Activated T-helper 1 cell treated with anti-CD3 and anti-CD28 coated beads, Interleukin-12 subunit alpha, Interleukin-12 subunit beta, Interleukin-2, Interleukin-4 antibody, amounts not matched to agents 30 ng/mL and 10 ng/mL and 1 ng/mL, durations not matched to agents 14 hours and 24 hours and 36 hours (primary cell): ENCODE measurements at regions of chr7 and their contacts with region 1.

Region 1: GRCh38 chr7:119167431-119167830 is 942.9 kb downstream of the ANKRD7 start:
- DNase-seq: no peak
- H3K4me3 Mint-ChIP-seq: no peak overlapping the region
- H3K27ac Mint-ChIP-seq: no peak overlapping the region
- H3K4me1 Mint-ChIP-seq: no peaks in the 10 kb centered on the region
- H3K27me3 Mint-ChIP-seq: no peaks in the 10 kb centered on the region

Region 2: GRCh38 chr7:118404211-118404610 is 763.2 kb before region 1 on chr7:
- intact Hi-C with region 1: loop called (anchors 5 kb)
- DNase-seq: no peak
- H3K4me3 Mint-ChIP-seq: no peak overlapping the region
- H3K27ac Mint-ChIP-seq: no peak overlapping the region
- H3K4me1 Mint-ChIP-seq: no peaks in the 10 kb centered on the region
- H3K27me3 Mint-ChIP-seq: no peaks in the 10 kb centered on the region